Activated CD8-positive, alpha-beta T cell treated with anti-CD3 and anti-CD28 coated beads, Interleukin-2, amount 10 ng/mL, durations not matched to agents 7 days and 5 days (primary cell): ENCODE measurements at regions of chr19 and their contacts with region 1.

Region 1: GRCh38 chr19:2552859-2553258 is 76.9 kb downstream of the GADD45B start:
- DNase-seq: peak; percentile 84
- ATAC-seq: peak; percentile 86
- H3K4me3 Mint-ChIP-seq: peak overlapping the region; percentile 67
- H3K27ac Mint-ChIP-seq: peak overlapping the region; percentile 86
- H3K4me1 Mint-ChIP-seq: peaks cover 64% of the 10 kb centered on the region
- H3K27me3 Mint-ChIP-seq: no peaks in the 10 kb centered on the region

Region 2: DNA sequence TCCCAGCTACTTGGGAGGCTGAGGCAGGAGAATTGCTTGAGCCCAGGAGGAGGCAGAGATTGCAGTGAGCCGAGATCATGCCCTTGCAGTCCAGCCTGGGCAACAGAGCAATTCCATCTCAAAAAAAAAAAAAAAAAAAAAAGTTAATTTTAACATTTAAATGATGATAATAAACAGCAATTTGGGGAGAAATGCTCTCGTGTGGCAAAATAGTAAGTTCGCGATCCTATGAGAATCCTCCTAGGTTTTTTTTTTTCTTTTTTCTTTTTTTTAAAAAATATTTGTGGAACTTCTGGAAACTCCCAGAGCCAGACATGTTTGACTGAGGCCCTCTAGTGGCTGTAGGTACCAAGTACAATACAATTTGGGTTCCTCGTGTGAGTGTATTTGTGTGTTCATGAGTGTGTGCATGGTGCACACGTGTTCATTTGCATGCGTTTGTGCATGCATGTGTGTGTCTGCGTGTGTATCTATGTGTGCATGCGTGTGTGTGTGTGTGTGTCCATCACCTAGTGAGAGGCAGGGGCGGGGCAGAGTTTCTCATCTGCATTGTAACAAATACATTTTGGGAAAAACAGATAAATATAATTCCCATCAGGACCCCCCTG is 161.6 kb before region 1 on chr19:
- CTCF ChIA-PET with region 1: no interaction called
- POLR2A ChIA-PET with region 1: no interaction called
- DNase-seq: peak; percentile 59
- ATAC-seq: peak; percentile 57
- H3K4me3 Mint-ChIP-seq: no peak overlapping the region
- H3K27ac Mint-ChIP-seq: no peak overlapping the region
- H3K4me1 Mint-ChIP-seq: peaks cover 26% of the 10 kb centered on the region
- H3K27me3 Mint-ChIP-seq: peaks cover 7% of the 10 kb centered on the region

Region 3: DNA sequence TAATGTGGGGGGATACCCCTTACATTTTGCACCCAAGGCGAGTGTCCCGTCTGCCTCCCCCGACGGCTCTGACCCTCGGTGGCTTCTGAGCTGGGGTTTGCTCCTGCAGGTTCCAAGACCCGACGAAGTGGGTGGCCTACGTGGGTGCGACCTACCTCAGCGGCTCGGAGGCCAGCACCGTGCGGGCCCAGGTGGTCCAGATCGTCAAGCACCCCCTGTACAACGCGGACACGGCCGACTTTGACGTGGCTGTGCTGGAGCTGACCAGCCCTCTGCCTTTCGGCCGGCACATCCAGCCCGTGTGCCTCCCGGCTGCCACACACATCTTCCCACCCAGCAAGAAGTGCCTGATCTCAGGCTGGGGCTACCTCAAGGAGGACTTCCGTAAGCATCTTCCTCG is 144.6 kb before region 1 on chr19:
- CTCF ChIA-PET with region 1: no interaction called
- POLR2A ChIA-PET with region 1: no interaction called
- DNase-seq: no peak
- ATAC-seq: no peak
- H3K4me3 Mint-ChIP-seq: no peak overlapping the region
- H3K27ac Mint-ChIP-seq: no peak overlapping the region
- H3K4me1 Mint-ChIP-seq: peaks cover 4% of the 10 kb centered on the region
- H3K27me3 Mint-ChIP-seq: no peaks in the 10 kb centered on the region

Region 4: DNA sequence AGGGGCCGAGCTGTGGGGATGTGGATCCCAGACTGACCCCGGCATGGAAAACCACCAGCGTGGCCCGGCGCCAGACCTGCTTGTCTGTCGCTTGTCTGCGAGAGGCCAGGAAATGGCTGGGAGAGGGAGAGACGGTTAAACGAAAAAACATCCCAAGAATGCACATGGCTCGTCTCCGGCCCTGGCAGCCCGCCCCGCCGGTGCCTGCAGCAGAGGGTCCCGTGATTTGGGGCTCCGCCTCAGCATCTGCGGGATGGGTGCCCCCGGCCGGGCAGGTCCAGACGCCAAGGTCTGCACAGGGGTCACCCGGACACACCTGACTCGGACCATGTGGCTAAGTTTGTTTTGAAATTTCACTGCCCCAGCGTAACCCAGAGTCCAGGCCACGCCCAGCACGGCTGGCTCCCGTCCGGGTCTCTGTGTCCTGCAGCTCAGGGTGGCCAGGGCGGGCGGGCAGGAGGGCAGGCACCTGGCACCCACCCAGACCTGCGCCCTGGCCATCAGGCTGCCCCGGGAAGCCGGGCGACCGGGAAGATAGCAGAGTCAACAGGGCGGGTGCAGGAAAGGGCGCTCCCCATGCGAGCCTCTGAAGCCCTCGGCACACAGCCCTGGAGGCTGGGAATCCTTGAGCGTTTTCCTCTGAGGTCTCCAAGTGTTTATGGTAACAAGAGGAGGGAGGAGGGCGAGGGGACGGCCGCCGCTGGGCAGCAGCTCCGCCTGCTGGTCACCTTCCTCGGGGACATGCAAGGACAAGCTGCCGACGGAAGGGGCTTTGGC is 26.2 kb after region 1 on chr19:
- CTCF ChIA-PET with region 1: interaction called, 10 read pairs
- POLR2A ChIA-PET with region 1: no interaction called
- DNase-seq: peak; percentile 80
- ATAC-seq: peak; percentile 79
- H3K4me3 Mint-ChIP-seq: peak overlapping the region; percentile 50
- H3K27ac Mint-ChIP-seq: no peak overlapping the region
- H3K4me1 Mint-ChIP-seq: peaks cover 12% of the 10 kb centered on the region
- H3K27me3 Mint-ChIP-seq: peaks cover 4% of the 10 kb centered on the region